ENCODE measurements at regions of chr6 and their contacts with region 1.

Region 1: GRCh38 chr6:722077-722524 is 29.2 kb upstream of the EXOC2 start:
- DNase-seq: peak; percentile 52
- H3K4me3 Mint-ChIP-seq: no peak overlapping the region
- H3K27ac Mint-ChIP-seq: no peak overlapping the region
- H3K4me1 Mint-ChIP-seq: no peaks in the 10 kb centered on the region
- H3K27me3 Mint-ChIP-seq: peaks cover 8% of the 10 kb centered on the region

Region 2: DNA sequence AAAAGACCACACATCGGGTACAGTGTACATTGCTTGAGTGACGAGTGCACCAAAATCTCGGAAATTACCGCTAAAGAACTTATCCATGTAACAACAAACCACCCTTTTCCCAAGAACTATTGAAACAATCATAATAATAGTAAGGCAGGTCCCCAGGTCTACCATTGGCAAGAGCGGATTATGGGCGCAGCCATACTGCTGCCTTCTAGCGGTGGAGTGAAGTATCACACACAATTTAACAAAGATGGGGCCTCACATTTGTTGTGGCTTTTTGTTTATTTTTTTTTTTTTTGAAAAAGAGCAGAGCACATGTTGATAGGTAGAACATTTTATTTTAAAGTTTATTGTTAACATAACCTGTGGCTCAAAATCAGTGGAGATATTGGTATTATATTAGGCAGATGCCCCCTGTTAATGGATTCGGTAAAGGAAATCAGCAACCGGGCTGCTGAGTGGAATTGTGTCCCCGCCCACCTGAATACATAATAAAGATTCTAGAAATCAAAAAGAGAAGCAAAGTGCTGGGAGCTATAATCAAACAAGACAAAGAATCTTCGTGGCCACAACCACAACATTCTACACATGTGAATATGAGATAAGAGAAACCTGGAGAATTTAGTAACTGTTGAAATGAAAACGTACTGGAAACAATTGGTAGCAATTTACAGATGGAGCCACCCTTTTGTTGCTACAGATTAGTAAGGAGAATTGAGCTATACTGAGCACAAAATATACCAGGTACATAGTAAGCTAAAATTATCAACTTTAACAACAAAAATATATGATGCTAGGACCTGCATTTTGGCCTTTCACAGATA is 65.1 kb after region 1 on chr6:
- intact Hi-C with region 1: loop called (anchors 1 kb)
- DNase-seq: no peak
- H3K4me3 Mint-ChIP-seq: no peak overlapping the region
- H3K27ac Mint-ChIP-seq: no peak overlapping the region
- H3K4me1 Mint-ChIP-seq: peaks cover 19% of the 10 kb centered on the region
- H3K27me3 Mint-ChIP-seq: peaks cover 8% of the 10 kb centered on the region

Region 3: GRCh38 chr6:1436334-1437306 is 714.5 kb after region 1 on chr6:
- intact Hi-C with region 1: loop called (anchors 2 kb)
- DNase-seq: peak; percentile 39
- H3K4me3 Mint-ChIP-seq: no peak overlapping the region
- H3K27ac Mint-ChIP-seq: no peak overlapping the region
- H3K4me1 Mint-ChIP-seq: no peaks in the 10 kb centered on the region
- H3K27me3 Mint-ChIP-seq: peaks cover 26% of the 10 kb centered on the region

Measured in activated T-helper 1 cell treated with anti-CD3 and anti-CD28 coated beads, Interleukin-12 subunit alpha, Interleukin-12 subunit beta, Interleukin-2, Interleukin-4 antibody, amounts not matched to agents 30 ng/mL and 10 ng/mL and 1 ng/mL, durations not matched to agents 14 hours and 24 hours and 36 hours (primary cell).